A673 (cell line): ENCODE measurements at regions of chr7 and their contacts with region 1.

Region 1: DNA sequence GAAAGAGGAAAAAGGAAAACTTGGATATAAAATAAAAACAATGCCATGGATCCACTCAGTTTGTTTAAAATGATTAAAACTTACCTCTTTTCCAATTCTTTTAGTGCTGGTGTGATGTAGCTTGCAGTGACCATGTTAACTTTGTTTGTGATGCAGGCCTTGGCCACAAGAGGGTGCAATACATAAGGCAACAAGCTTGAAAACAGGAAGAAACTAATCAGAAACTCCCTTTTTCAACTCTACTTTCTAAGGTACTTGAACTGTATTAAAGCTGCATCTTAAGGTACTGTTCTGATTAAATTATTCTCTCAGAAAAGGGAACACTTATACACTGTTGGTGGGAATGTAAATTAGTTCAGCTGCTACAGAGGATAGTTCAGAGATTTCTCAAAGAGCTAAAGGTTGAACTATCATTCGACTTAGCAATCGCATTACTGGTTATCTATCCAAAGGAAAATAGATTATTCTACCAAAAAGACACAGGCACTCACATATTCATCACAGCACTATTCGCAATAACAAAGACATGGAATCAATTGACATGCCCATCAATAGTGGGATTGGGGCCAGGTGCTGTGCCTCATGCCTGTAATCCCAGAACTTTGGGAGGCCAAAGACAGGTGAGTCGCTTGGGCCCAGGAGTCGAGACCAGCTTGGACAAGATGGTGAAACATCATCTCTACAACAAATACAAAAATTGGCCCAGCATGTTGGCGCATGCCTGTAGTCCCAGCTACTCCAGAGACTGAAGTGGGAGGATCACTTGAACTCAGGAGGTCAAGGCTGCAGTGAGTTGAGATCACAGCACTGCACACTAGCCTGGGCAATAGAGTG is 50.9 kb downstream of the AASS start:
- DNase-seq: peak; percentile 82
- H3K4me3 ChIP-seq: no peak overlapping the region
- H3K27ac ChIP-seq: no peak overlapping the region
- H3K4me1 ChIP-seq: no peaks in the 10 kb centered on the region
- H3K27me3 ChIP-seq: no peaks in the 10 kb centered on the region
- CTCF ChIP-seq: peak; percentile 93

Region 2: DNA sequence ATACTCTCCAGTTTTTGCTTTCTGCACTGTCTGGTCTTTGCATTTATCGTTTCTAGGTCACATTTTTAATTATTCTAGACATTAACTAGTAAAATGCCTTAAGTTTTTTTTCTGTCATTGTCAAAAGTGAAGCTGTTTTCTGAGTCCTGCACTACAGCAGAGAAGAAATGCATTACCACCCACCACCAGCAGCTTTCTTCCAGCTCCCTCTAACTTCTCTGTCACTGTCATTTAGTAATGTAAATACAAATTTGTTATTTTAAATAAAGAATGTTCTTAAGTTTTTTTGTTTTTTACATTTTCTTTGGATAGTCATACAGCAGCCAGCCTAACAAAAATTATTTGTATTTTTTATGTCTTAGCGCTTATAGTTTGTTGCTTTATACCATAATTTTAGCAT is 201.4 kb before region 1 on chr7:
- CTCF ChIA-PET with region 1: no interaction called
- POLR2A ChIA-PET with region 1: no interaction called
- intact Hi-C with region 1: no loop called
- DNase-seq: no peak
- H3K4me3 ChIP-seq: no peak overlapping the region
- H3K27ac ChIP-seq: no peak overlapping the region
- H3K4me1 ChIP-seq: no peaks in the 10 kb centered on the region
- H3K27me3 ChIP-seq: peaks cover 2% of the 10 kb centered on the region
- CTCF ChIP-seq: no peak

Region 3: GRCh38 chr7:122528879-122529481 is 435.8 kb after region 1 on chr7:
- CTCF ChIA-PET with region 1: interaction called, 7 read pairs
- POLR2A ChIA-PET with region 1: no interaction called
- intact Hi-C with region 1: loop called (anchors 2 kb)
- DNase-seq: peak; percentile 70
- H3K4me3 ChIP-seq: no peak overlapping the region
- H3K27ac ChIP-seq: no peak overlapping the region
- H3K4me1 ChIP-seq: peaks cover 23% of the 10 kb centered on the region
- H3K27me3 ChIP-seq: no peaks in the 10 kb centered on the region
- CTCF ChIP-seq: peak; percentile 67

Region 4: GRCh38 chr7:122965306-122965705 is 872.1 kb after region 1 on chr7:
- CTCF ChIA-PET with region 1: no interaction called
- POLR2A ChIA-PET with region 1: no interaction called
- intact Hi-C with region 1: no loop called
- DNase-seq: no peak
- H3K4me3 ChIP-seq: no peak overlapping the region
- H3K27ac ChIP-seq: peak overlapping the region; percentile 74
- H3K4me1 ChIP-seq: peaks cover 53% of the 10 kb centered on the region
- H3K27me3 ChIP-seq: no peaks in the 10 kb centered on the region
- CTCF ChIP-seq: no peak